ENCODE measurements at regions of chr12 and their contacts with region 1.

Region 1: DNA sequence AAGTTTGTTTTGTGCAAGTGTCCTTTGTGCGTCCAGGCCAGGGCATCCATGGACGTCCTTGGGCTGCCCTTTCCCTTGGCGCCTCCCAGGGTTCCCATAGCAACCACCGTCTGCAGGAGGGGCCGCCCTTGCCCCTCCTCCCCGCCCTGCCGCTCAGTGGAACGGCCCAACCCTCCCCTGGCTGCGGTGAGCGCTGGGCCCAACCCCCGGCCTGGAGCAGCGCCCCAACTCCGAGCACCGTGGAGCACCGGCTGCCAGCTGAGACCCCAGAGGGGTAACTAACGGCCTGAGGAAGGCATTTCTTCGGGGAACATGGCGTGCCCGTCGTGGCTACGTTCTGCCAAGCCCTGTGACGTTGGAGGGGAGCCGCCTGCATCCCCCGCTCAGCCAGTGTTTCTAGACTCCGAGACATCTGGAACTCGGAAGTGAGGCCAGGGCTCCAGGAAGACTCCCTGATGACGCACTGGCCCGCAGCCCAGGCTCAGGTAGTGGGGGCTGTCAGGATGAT is 5.3 kb upstream of the ACACB start:
- DNase-seq: peak; percentile 51
- ATAC-seq: peak; percentile 86
- H3K4me3 Mint-ChIP-seq: peak overlapping the region; percentile 59
- H3K27ac Mint-ChIP-seq: peak overlapping the region; percentile 55
- H3K4me1 Mint-ChIP-seq: peaks cover 23% of the 10 kb centered on the region
- H3K27me3 Mint-ChIP-seq: no peaks in the 10 kb centered on the region
- CTCF ChIP-seq: no peak

Region 2: DNA sequence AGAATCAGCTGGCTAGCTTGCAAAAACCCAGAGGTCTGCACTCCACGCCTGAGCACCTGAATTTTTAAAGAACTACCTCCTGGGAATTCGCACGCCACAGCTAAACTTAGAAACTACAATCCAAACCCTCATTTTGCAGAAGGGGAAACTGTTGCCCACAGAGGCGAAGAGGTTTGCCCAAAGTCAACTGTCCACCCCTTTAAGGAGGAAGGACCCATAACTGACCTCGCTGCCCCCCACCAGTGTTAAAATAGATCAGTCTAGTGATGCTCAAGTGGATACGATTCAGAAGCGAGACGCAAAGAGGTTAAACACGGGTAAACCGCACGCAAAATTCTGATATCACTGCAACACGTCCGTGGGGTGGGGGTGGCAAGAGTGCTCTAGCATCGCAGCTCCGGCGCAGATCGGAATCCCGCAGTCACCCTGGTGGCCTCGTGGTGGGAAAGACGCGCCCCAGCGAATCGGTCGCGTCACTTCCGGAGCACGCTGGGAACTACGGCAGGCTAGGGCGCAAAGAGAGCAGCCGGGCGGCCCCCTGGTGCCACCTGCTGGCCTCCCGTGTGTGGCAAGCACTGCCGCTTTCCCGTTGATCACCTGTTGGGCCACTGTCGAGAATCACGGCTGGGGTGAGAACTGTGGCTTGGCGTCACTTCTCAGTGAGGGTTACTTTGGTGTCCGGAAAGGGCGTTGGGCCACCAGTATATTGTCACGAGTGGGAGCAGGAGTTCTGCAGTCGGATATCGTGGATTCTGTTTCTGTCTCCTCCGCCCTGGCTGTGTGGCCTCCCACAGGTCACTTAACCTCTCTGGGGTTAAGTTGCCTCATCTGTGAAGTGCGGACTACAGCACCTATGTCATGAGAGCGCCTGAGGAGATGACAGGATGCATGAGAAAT is 17.8 kb before region 1 on chr12 and contains the start of gene ALKBH2:
- CTCF ChIA-PET with region 1: interaction called, 30 read pairs
- POLR2A ChIA-PET with region 1: interaction called, 4 read pairs
- intact Hi-C with region 1: no loop called
- DNase-seq: peak; percentile 96
- ATAC-seq: peak; percentile 73
- H3K4me3 Mint-ChIP-seq: peak within 1 kb of the TSS; percentile 81
- H3K27ac Mint-ChIP-seq: peak within 1 kb of the TSS; percentile 91
- H3K4me1 Mint-ChIP-seq: peaks cover 36% of the 10 kb centered on the region
- H3K27me3 Mint-ChIP-seq: no peaks in the 10 kb centered on the region
- CTCF ChIP-seq: peak; percentile 92
- total RNA-seq, gene ALKBH2: 35.6 to 37.8 TPM

Region 3: DNA sequence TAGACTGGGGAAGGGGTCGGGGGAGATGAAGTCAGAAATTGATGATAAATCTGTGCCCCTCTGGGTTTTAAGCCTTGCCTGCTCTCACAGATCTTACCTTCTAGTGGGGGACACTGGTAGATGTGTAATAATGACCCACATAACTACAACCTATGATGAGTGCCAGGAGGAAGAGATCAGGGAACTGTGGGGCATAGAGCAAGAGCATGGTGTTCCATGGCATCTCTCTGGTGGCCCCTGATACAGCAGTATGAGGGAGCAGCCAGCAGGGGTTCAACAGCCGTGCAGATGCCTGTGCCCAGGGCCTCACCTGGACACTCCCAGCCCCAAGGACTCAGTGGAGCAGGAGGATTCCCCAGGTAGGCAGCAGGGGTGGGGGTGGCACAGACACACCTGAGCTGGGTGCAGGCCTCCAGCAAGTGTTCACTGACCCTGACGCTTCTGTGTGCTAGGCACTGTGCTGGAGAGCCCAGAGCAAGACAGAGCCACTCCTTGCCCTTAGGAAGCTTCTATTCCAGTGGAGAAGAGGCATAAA is 10.4 kb after region 1 on chr12:
- CTCF ChIA-PET with region 1: interaction called, 11 read pairs
- POLR2A ChIA-PET with region 1: interaction called, 3 read pairs
- intact Hi-C with region 1: no loop called
- DNase-seq: no peak
- ATAC-seq: no peak
- H3K4me3 Mint-ChIP-seq: no peak overlapping the region
- H3K27ac Mint-ChIP-seq: no peak overlapping the region
- H3K4me1 Mint-ChIP-seq: no peaks in the 10 kb centered on the region
- H3K27me3 Mint-ChIP-seq: no peaks in the 10 kb centered on the region
- CTCF ChIP-seq: no peak

Region 4: DNA sequence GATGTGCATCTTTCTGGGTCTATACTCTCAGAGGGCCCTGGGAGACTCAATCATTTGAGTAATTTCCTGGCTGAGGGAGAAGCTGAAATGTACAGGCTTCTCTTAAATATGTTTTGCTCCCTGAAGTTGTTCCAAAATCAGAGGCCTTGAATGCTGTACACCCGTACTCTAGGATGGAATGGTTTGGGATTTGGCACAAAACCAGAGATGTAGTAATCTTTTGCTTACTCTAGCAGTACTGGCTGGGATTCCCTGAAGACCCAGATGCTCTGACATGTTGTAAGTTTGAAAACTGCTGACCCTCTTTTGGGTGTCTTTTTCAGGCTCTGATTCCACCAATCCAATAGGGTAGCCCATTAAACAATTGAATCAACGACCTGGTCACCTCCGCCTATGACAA is 15.7 kb after region 1 on chr12:
- CTCF ChIA-PET with region 1: interaction called, 11 read pairs
- POLR2A ChIA-PET with region 1: no interaction called
- intact Hi-C with region 1: no loop called
- DNase-seq: no peak
- ATAC-seq: no peak
- H3K4me3 Mint-ChIP-seq: no peak overlapping the region
- H3K27ac Mint-ChIP-seq: no peak overlapping the region
- H3K4me1 Mint-ChIP-seq: no peaks in the 10 kb centered on the region
- H3K27me3 Mint-ChIP-seq: no peaks in the 10 kb centered on the region
- CTCF ChIP-seq: no peak

Region 5: GRCh38 chr12:109154451-109155438 is 43.7 kb after region 1 on chr12:
- CTCF ChIA-PET with region 1: interaction called, 11 read pairs
- POLR2A ChIA-PET with region 1: interaction called, 4 read pairs
- intact Hi-C with region 1: no loop called
- DNase-seq: peak; percentile 89
- ATAC-seq: peak; percentile 93
- H3K4me3 Mint-ChIP-seq: peak overlapping the region; percentile 84
- H3K27ac Mint-ChIP-seq: peak overlapping the region; percentile 85
- H3K4me1 Mint-ChIP-seq: peaks cover 12% of the 10 kb centered on the region
- H3K27me3 Mint-ChIP-seq: no peaks in the 10 kb centered on the region
- CTCF ChIP-seq: no peak

Region 6: GRCh38 chr12:109308534-109309380 is 197.7 kb after region 1 on chr12 and contains the start of gene FOXN4:
- CTCF ChIA-PET with region 1: no interaction called
- POLR2A ChIA-PET with region 1: no interaction called
- intact Hi-C with region 1: no loop called
- DNase-seq: no peak
- ATAC-seq: no peak
- H3K4me3 Mint-ChIP-seq: peak within 1 kb of the TSS; percentile 72
- H3K27ac Mint-ChIP-seq: no peak within 1 kb of the TSS
- H3K4me1 Mint-ChIP-seq: peaks cover 9% of the 10 kb centered on the region
- H3K27me3 Mint-ChIP-seq: peaks cover 56% of the 10 kb centered on the region
- CTCF ChIP-seq: no peak
- total RNA-seq, gene FOXN4: not detected

Region 7: GRCh38 chr12:109385339-109386067 is 274.5 kb after region 1 on chr12:
- CTCF ChIA-PET with region 1: interaction called, 11 read pairs
- POLR2A ChIA-PET with region 1: no interaction called
- intact Hi-C with region 1: loop called (anchors 5 kb)
- DNase-seq: no peak
- ATAC-seq: no peak
- H3K4me3 Mint-ChIP-seq: no peak overlapping the region
- H3K27ac Mint-ChIP-seq: no peak overlapping the region
- H3K4me1 Mint-ChIP-seq: no peaks in the 10 kb centered on the region
- H3K27me3 Mint-ChIP-seq: peaks cover 19% of the 10 kb centered on the region
- CTCF ChIP-seq: peak; percentile 51

Region 8: DNA sequence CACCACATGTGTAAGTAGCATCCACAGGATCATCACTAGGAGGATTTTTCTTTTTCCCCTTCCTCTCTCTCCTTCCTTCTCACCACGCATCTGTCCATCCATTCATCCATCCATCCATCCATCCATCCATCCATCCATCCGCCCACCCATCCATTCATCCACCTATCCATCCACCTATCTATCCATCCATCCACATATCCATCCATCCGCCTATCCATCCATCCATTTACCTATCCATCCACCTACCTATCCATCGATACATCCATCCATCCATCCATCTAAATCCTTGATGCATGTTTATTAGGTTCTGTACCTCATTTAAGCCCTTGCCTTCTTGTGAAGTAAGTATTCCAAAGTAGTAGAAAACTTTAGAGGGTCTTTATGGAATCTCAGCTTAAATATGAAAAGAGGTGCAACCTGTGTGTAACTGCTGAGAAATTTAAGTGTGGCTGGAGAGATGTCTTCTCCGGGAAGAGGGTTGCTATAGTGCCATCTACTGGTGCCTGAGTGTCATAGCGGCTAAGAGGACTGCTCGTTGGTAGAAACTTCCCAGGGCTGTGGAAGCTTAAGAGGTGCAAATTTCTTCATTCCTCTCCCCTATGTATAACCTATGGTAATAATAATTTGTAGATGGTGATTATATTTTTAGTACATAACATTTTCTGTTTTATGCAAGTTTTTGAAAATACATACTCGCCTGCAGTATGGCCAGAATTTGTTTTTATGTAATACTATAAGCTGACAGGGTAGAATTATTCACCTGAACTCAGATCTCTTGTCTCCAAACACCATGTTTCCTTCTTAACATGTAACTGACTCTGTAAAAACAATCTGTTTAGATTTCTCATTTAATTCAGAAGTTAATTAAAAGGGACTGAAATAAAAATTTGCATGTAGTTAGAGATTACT is 282.6 kb after region 1 on chr12:
- CTCF ChIA-PET with region 1: interaction called, 7 read pairs
- POLR2A ChIA-PET with region 1: no interaction called
- intact Hi-C with region 1: loop called (anchors 5 kb)
- DNase-seq: peak; percentile 51
- ATAC-seq: peak; percentile 83
- H3K4me3 Mint-ChIP-seq: no peak overlapping the region
- H3K27ac Mint-ChIP-seq: no peak overlapping the region
- H3K4me1 Mint-ChIP-seq: no peaks in the 10 kb centered on the region
- H3K27me3 Mint-ChIP-seq: peaks cover 22% of the 10 kb centered on the region
- CTCF ChIP-seq: peak; percentile 88

Measured in activated CD8-positive, alpha-beta T cell treated with anti-CD3 and anti-CD28 coated beads for 36 hours (primary cell).